ENCODE measurements at regions of chr1 and their contacts with region 1.

Region 1: GRCh38 chr1:33219881-33220661 is 36.2 kb upstream of the ZNF362 start:
- DNase-seq: peak; percentile 88 to 90
- H3K4me3 ChIP-seq: peak overlapping the region; percentile 25; the same call in 1 of the 2 replicates
- H3K27ac ChIP-seq: peak overlapping the region; percentile 99
- H3K4me1 ChIP-seq: peaks cover 48% of the 10 kb centered on the region
- H3K27me3 ChIP-seq: no peaks in the 10 kb centered on the region
- CTCF ChIP-seq: no peak

Region 2: GRCh38 chr1:32413507-32414185 is 806.4 kb before region 1 on chr1:
- CTCF ChIA-PET with region 1: interaction called, 12 read pairs
- POLR2A ChIA-PET with region 1: no interaction called
- intact Hi-C with region 1: no loop called
- DNase-seq: peak; percentile 50 to 63
- H3K4me3 ChIP-seq: no peak overlapping the region
- H3K27ac ChIP-seq: no peak overlapping the region
- H3K4me1 ChIP-seq: no peaks in the 10 kb centered on the region
- H3K27me3 ChIP-seq: 0 out of 2 replicates have a peak, but pooled peaks cover 7% of the 10 kb centered on the region
- CTCF ChIP-seq: peak; percentile 97

Region 3: DNA sequence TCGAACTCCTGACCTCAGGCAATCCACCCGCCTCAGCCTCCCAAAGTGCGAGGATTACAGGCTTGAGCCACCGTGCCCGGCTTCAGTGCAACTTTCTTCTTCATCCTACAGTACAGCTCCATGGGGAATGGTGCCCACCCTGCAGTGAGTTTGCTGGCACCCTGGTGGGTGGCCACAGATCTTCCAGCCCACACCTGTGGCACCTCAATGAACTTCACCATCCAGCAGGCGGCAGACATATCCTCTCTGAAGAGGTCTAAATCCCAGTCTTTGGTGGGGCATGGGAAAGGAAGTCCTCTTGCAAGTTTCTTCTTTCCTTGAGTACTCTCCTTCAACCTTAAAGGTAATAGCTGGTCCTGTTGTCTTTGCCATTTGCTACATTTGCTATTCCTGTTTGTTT is 698.9 kb before region 1 on chr1:
- CTCF ChIA-PET with region 1: no interaction called
- POLR2A ChIA-PET with region 1: no interaction called
- intact Hi-C with region 1: no loop called
- DNase-seq: no peak
- H3K4me3 ChIP-seq: peak overlapping the region; percentile 62; the same call in 1 of the 2 replicates
- H3K27ac ChIP-seq: no peak overlapping the region
- H3K4me1 ChIP-seq: peaks cover 6% of the 10 kb centered on the region; the same call in 1 of the 2 replicates
- H3K27me3 ChIP-seq: no peaks in the 10 kb centered on the region
- CTCF ChIP-seq: no peak

Region 4: DNA sequence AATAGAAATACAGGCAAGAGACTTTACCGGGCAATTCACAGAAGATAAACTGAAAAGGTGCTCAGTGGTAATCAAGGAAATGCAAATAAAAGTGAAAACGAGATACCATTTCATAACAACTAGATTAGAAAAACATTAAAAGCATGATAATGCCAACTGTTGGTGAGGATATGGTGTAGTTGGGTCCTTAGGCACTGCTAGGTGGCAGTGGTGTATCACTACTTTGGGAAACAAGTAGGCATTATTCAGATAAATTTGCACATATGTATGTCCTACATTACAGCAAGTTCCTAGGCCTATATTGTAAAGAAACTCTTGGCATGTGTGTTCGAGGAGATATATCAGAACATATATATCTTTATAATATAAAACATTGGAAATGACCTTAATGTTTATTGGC is 108.1 kb before region 1 on chr1:
- CTCF ChIA-PET with region 1: no interaction called
- POLR2A ChIA-PET with region 1: no interaction called
- intact Hi-C with region 1: loop called (anchors 5 kb)
- DNase-seq: no peak
- H3K4me3 ChIP-seq: no peak overlapping the region
- H3K27ac ChIP-seq: no peak overlapping the region
- H3K4me1 ChIP-seq: no peaks in the 10 kb centered on the region
- H3K27me3 ChIP-seq: no peaks in the 10 kb centered on the region
- CTCF ChIP-seq: peak; percentile 69

Region 5: GRCh38 chr1:33181921-33182341 is 38.1 kb before region 1 on chr1 and contains the start of gene TRIM62:
- CTCF ChIA-PET with region 1: no interaction called
- POLR2A ChIA-PET with region 1: no interaction called
- intact Hi-C with region 1: loop called (anchors 5 kb)
- DNase-seq: peak; percentile 54 to 77
- H3K4me3 ChIP-seq: peak within 1 kb of the TSS; percentile 87
- H3K27ac ChIP-seq: no peak within 1 kb of the TSS
- H3K4me1 ChIP-seq: peaks cover 4% of the 10 kb centered on the region; the same call in 1 of the 2 replicates
- H3K27me3 ChIP-seq: no peaks in the 10 kb centered on the region
- CTCF ChIP-seq: no peak
- total RNA-seq, gene TRIM62: 9.9 and 14.3 TPM in 2 replicates

Region 6: DNA sequence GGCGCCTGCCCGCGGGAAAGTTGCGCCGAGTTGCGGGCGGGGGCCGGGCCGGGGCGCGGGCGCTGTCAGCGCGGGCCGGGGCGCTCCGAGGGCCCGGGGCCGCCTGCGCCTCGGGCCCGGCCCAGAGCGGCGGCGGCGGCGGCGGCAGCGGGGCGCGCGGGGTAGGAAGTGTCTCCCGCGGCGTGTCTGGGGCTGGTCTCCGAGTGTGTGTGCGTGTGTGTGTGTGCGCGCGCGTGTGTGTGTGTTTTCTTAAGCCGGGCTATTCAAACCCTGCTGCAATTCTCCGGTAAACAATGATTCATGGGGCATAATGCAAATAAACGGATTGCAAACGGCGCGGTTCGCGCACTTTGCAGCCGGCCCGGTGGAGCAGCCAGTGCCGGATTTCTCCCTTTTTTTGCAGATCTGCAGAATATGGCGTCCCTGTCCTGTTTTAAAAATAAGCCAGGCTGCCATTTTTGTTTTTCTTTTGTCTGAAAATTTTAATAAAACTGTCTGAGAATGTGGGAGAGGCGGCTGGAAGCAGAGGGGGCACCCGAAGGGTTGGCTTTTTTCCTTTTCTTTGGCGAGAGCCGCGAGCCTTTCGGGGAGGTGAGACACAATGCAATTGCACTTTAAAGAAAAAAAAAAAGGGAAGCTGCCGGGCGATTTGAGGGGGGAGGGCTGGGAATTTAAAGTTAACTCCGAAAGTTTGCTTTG is 36.8 kb after region 1 on chr1:
- CTCF ChIA-PET with region 1: no interaction called
- POLR2A ChIA-PET with region 1: no interaction called
- intact Hi-C with region 1: loop called (anchors 1 kb)
- DNase-seq: peak; percentile 41 to 77
- H3K4me3 ChIP-seq: peak overlapping the region; percentile 67
- H3K27ac ChIP-seq: peak overlapping the region; percentile 62
- H3K4me1 ChIP-seq: peaks cover 22% of the 10 kb centered on the region
- H3K27me3 ChIP-seq: no peaks in the 10 kb centered on the region
- CTCF ChIP-seq: no peak

Region 7: DNA sequence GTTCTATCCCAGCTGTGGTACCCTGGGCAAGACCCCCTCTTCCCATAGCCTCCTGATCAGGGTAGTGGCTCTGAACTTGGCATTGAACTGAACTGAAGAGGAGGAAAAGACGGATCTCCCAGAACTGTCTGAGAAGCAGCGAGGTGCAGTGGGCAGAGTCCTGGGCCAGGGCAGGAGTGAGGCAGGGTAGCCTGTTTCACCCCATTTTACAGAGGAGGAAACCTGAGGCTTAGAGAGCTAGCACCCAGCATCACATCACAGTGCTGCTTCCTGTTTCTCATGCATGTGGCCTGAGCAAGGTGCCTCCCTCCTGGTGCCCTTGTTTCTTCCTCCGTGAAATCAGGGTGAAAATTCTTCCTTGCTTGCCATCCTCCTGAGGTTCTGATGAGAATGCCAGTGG is 53.3 kb after region 1 on chr1:
- CTCF ChIA-PET with region 1: no interaction called
- POLR2A ChIA-PET with region 1: no interaction called
- intact Hi-C with region 1: no loop called
- DNase-seq: no peak
- H3K4me3 ChIP-seq: no peak overlapping the region
- H3K27ac ChIP-seq: no peak overlapping the region
- H3K4me1 ChIP-seq: no peaks in the 10 kb centered on the region
- H3K27me3 ChIP-seq: no peaks in the 10 kb centered on the region
- CTCF ChIP-seq: no peak

Region 8: DNA sequence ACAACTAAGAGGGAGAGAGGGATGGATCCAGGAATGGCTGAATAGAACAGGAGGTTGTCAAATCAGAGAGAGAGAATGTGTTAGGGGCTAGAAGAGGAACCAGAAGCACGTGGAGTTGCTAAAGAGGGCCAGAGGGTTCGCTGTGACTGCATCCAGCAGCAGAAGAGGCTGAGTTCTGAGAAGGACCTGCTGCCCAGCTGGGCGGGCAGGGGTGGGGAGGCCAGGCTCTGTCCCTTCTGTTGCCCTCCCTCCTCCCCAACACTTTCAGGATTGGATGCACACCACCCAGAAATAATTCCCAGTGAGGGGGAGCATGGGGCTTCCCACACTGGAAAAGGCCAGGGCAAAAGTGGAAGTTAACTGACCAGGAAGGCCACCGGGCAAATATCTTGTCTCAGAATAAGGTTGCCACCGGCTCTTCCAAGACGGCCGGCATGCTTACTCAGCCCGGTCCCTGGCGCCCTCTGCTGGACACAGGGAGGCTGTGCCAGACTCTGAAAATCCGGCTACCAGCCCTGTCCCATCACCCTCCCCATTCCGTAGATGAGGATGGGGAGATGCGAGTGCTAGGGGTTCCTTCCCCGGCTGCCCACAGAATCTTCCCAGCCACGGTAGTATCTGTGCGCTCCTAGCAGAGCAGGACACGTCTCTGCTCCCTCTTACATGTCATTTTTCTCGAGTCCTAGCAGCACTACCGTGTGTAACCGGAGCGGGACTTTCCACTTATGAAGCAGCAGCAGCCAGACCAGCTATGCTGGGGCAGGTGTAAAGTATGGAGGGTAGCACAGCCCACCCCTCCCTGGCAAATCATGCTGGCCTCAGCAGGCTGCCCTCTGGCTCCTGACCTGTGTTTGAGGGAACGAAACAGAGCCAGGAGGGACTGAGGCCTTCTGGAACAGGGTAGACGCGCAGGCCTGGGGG is 147.7 kb after region 1 on chr1:
- CTCF ChIA-PET with region 1: no interaction called
- POLR2A ChIA-PET with region 1: no interaction called
- intact Hi-C with region 1: loop called (anchors 1 kb)
- DNase-seq: peak; percentile 48 to 80
- H3K4me3 ChIP-seq: no peak overlapping the region
- H3K27ac ChIP-seq: no peak overlapping the region
- H3K4me1 ChIP-seq: no peaks in the 10 kb centered on the region; the same call in 1 of the 2 replicates
- H3K27me3 ChIP-seq: no peaks in the 10 kb centered on the region
- CTCF ChIP-seq: peak; percentile 94

Region 9: GRCh38 chr1:33455539-33456501 is 235.7 kb after region 1 on chr1:
- CTCF ChIA-PET with region 1: no interaction called
- POLR2A ChIA-PET with region 1: no interaction called
- intact Hi-C with region 1: loop called (anchors 5 kb)
- DNase-seq: peak; percentile 50 to 51
- H3K4me3 ChIP-seq: no peak overlapping the region
- H3K27ac ChIP-seq: no peak overlapping the region
- H3K4me1 ChIP-seq: peaks cover 32% of the 10 kb centered on the region
- H3K27me3 ChIP-seq: no peaks in the 10 kb centered on the region
- CTCF ChIP-seq: peak; percentile 76

Measured in PC-9 (cell line).